ENCODE measurements at regions of chr14 and their contacts with region 1.

Region 1: GRCh38 chr14:85867450-85867849 is 337.5 kb downstream of the FLRT2 start:
- DNase-seq: peak in 1 of 9 experiments; percentile 2
- ATAC-seq: no peak
- H3K4me3 ChIP-seq: no peak overlapping the region
- H3K4me3 Mint-ChIP-seq: no peak overlapping the region
- H3K27ac ChIP-seq: no peak overlapping the region
- H3K27ac Mint-ChIP-seq: no peak overlapping the region
- H3K4me1 ChIP-seq: no peaks in the 10 kb centered on the region
- H3K4me1 Mint-ChIP-seq: no peaks in the 10 kb centered on the region
- H3K27me3 ChIP-seq: no peaks in the 10 kb centered on the region
- H3K27me3 Mint-ChIP-seq: no peaks in the 10 kb centered on the region
- CTCF ChIP-seq: no peak

Region 2: GRCh38 chr14:85991156-85991555 is 123.7 kb after region 1 on chr14:
- CTCF ChIA-PET with region 1: no interaction called
- POLR2A ChIA-PET with region 1: no interaction called
- intact Hi-C with region 1: no loop called
- DNase-seq: no peak
- ATAC-seq: no peak
- H3K4me3 ChIP-seq: no peak overlapping the region
- H3K4me3 Mint-ChIP-seq: no peak overlapping the region
- H3K27ac ChIP-seq: no peak overlapping the region
- H3K27ac Mint-ChIP-seq: no peak overlapping the region
- H3K4me1 ChIP-seq: no peaks in the 10 kb centered on the region
- H3K4me1 Mint-ChIP-seq: peaks cover 10% of the 10 kb centered on the region
- H3K27me3 ChIP-seq: no peaks in the 10 kb centered on the region
- H3K27me3 Mint-ChIP-seq: no peaks in the 10 kb centered on the region
- CTCF ChIP-seq: no peak

Region 3: DNA sequence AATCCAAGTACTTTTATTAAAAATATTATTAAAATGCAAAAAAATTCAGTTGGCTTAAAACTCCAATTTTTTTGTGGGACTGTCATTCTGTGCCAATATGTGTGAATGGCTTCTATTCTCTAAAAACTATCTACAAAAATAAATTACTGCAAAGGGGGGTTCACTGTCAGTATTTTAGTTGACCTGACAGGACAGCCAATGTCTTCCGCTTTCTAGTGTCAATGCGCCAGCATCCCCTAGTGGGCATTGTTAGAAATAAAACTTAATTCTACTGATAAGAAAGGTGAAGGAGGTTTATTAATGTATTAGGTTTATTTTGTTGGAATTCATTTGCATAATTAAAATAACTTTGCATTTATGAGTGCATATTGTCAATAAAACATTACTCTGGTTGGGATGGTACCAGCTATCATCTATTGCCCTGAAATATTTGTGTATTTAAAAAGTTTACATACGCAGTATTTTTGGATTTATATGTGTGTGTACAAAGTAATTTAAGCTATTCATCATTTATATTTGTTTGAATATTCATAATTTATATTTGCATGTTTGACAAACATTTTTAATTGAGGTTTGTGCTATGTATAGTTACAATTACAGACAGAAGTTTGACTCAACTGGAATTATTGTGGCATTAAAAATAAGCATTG is 189.7 kb after region 1 on chr14:
- CTCF ChIA-PET with region 1: no interaction called
- POLR2A ChIA-PET with region 1: no interaction called
- intact Hi-C with region 1: loop called in 1 of 2 experiments (anchors 5 kb)
- DNase-seq: peak in 5 of 9 experiments; percentile 7 to 31 (median 22)
- ATAC-seq: no peak
- H3K4me3 ChIP-seq: no peak overlapping the region
- H3K4me3 Mint-ChIP-seq: no peak overlapping the region
- H3K27ac ChIP-seq: no peak overlapping the region
- H3K27ac Mint-ChIP-seq: no peak overlapping the region
- H3K4me1 ChIP-seq: no peaks in the 10 kb centered on the region
- H3K4me1 Mint-ChIP-seq: peaks cover 5% of the 10 kb centered on the region
- H3K27me3 ChIP-seq: no peaks in the 10 kb centered on the region
- H3K27me3 Mint-ChIP-seq: no peaks in the 10 kb centered on the region
- CTCF ChIP-seq: peak; percentile 76

Region 4: DNA sequence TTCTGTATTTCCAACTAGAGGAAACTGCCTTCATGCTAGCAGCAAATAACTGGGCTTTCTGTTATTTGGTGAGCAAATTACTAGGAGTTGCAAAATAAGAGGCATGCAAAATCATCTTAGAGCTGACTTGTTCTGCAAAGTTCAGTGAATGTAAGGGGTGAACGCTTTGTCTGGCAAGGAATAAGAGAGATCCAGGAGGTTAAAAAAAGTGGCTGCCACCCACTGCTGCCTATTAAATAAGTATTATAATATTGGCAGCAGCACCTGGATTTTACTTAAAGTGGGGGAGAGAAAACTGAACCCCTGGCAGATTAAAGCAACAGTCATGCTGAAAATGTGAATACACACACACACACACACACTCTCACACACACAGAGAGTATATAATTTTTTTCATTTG is 219.5 kb after region 1 on chr14:
- CTCF ChIA-PET with region 1: no interaction called
- POLR2A ChIA-PET with region 1: no interaction called
- intact Hi-C with region 1: no loop called
- DNase-seq: no peak
- ATAC-seq: no peak
- H3K4me3 ChIP-seq: no peak overlapping the region
- H3K4me3 Mint-ChIP-seq: no peak overlapping the region
- H3K27ac ChIP-seq: no peak overlapping the region
- H3K27ac Mint-ChIP-seq: no peak overlapping the region
- H3K4me1 ChIP-seq: no peaks in the 10 kb centered on the region
- H3K4me1 Mint-ChIP-seq: no peaks in the 10 kb centered on the region
- H3K27me3 ChIP-seq: no peaks in the 10 kb centered on the region
- H3K27me3 Mint-ChIP-seq: no peaks in the 10 kb centered on the region
- CTCF ChIP-seq: no peak